Heart right ventricle (tissue), 16 donors: ENCODE measurements at regions of chr6 and their contacts with region 1.

Region 1: DNA sequence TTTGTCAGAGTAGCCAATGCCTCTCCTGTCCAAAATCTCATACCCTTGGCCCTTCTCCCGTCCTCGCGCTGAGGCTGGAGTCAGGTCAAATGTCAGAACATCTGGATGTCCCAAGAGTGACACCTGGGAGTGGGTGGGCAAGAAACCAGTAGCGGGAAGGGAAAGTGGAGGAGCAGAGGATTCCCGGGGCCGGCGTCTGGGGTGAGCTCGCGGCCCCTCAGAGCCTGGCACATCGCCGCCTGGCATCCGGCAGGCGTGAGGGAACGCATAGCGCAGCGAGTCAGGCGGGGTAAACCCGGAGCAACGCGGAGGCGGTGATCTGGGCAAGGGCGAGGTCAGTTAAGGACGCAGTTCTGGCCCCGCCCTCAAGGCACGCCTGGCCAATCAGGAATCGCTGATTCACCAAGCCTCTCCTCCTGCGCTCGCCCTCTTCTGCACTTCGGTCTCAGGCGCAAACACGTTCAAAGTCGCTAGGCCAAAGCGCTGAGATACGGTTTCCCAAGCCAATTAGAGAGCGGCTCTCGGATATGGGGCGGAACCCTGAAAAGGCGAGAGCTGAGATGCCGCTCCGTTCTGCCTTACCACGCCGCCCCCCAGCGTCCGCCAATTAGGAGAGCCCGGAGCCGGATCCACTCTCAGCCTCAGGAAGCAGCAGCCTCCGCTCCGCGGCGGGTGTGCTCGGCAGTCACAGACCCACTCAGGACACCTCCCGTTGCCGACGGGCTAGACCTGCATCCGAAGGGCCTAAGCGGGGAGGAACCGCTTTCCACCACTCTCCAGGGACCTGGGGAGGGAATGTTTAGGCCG is 22.5 kb downstream of the VPS52 start:
- DNase-seq: peak; percentile 97 to 98
- ATAC-seq: peak; percentile 94 to 98 (median 97)
- H3K4me3 ChIP-seq: peak overlapping the region; percentile 22 to 76 (median 61)
- H3K27ac ChIP-seq: peak overlapping the region; percentile 82 to 96 (median 92)
- H3K4me1 ChIP-seq: peaks cover 7 to 33% (median 22%) of the 10 kb centered on the region in 9 donors
- H3K27me3 ChIP-seq: peaks cover 0 to 12% (median 0%) of the 10 kb centered on the region in 7 donors
- CTCF ChIP-seq: peak in 5 of 9 donors; percentile 28 to 56 (median 36)

Region 2: GRCh38 chr6:32894080-32895005 is 354.8 kb before region 1 on chr6:
- intact Hi-C with region 1: loop called in 1 of 10 experiments (anchors 1 kb)
- DNase-seq: peak; percentile 94 to 95
- ATAC-seq: peak; percentile 99 to 100 (median 100)
- H3K4me3 ChIP-seq: peak overlapping the region; percentile 32 to 82 (median 70)
- H3K27ac ChIP-seq: peak overlapping the region; percentile 62 to 92 (median 86)
- H3K4me1 ChIP-seq: peaks cover 0 to 18% (median 10%) of the 10 kb centered on the region in 9 donors
- H3K27me3 ChIP-seq: no peaks in the 10 kb centered on the region
- CTCF ChIP-seq: peak in 2 of 9 donors; percentile 17 to 27

Region 3: GRCh38 chr6:33008944-33009861 is 239.9 kb before region 1 on chr6 and contains the start of gene HLA-DOA:
- intact Hi-C with region 1: loop called in 7 of 10 experiments (anchors 1 to 10 kb)
- DNase-seq: peak in 1 of 2 donors; percentile 30
- ATAC-seq: peak; percentile 24 to 79 (median 54)
- H3K4me3 ChIP-seq: peak within 1 kb of the TSS in 8 of 10 donors; percentile 6 to 54 (median 43)
- H3K27ac ChIP-seq: peak within 1 kb of the TSS in 5 of 10 donors; percentile 25 to 79 (median 48)
- H3K4me1 ChIP-seq: peaks cover 0 to 16% (median 9%) of the 10 kb centered on the region in 9 donors
- H3K27me3 ChIP-seq: peaks cover 0 to 38% (median 9%) of the 10 kb centered on the region in 7 donors
- CTCF ChIP-seq: peak in 1 of 9 donors; percentile 18
- total RNA-seq, gene HLA-DOA: 0.75 to 22.8 (median 2.0) TPM

Region 4: DNA sequence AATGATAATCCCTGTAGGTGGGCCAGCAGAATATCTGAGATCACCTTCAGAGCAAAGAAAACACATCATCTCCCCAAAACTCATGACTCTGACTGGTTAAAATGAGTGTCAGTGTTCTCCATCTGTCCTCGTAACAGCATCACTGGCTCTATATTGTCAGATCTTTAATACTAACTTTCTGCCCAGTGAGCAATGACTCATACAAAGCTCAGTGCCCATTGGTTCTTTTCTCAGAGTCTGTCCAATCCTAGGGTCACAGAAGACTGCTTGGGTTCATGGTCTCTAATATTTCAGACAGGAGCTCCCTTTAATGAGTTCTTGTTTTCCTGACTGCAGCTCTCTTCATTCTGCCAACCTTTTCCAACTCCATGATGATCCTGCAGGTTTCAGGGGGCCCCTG is 137.0 kb before region 1 on chr6:
- intact Hi-C with region 1: loop called in 5 of 10 experiments (anchors 5 to 10 kb)
- DNase-seq: peak in 1 of 2 donors; percentile 45
- ATAC-seq: peak; percentile 74 to 96 (median 91)
- H3K4me3 ChIP-seq: no peak overlapping the region
- H3K27ac ChIP-seq: no peak overlapping the region
- H3K4me1 ChIP-seq: peaks cover 0 to 36% (median 3%) of the 10 kb centered on the region in 9 donors
- H3K27me3 ChIP-seq: peaks cover 0 to 70% (median 55%) of the 10 kb centered on the region in 7 donors
- CTCF ChIP-seq: no peak

Region 5: DNA sequence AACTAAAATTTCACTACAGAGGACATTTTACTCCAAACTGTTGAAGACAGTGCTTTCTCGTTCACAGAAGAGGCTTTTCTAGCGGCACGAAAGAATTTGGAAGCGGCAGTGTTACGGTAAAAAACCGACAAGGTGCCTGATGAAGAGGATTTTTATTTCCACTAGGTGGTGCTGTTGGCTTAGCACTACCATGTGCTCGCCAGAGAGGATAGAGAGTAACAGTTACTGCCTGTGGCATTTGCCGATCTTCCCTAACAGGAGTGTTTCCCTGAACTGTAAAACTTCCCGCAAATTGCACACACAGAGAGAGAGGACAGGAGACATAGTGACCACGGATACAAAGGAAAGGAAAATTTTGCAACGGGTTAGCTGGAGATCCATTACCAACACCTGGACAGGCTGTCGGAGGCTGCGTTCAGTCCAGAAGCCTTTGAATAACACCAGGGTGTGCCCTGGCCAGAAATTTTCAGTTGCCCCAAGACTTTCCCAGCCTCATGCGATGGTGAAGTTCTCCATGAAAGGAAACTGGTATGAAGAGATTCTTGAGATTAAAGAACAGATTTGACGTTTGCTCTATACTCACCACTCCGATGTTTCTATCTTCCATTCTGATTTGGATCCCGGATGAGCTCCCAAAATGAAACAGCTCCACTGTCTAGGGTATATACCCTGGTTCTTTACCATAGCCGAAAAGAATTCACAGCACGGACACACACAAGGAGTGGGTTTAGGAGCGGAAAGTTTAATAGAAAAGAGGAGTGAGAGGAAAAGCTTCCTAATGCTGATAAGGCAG is 125.2 kb before region 1 on chr6:
- intact Hi-C with region 1: loop called in 9 of 10 experiments (anchors 2 to 10 kb)
- DNase-seq: no peak
- ATAC-seq: no peak
- H3K4me3 ChIP-seq: no peak overlapping the region
- H3K27ac ChIP-seq: no peak overlapping the region
- H3K4me1 ChIP-seq: no peaks in the 10 kb centered on the region
- H3K27me3 ChIP-seq: peaks cover 0 to 29% (median 0%) of the 10 kb centered on the region in 7 donors
- CTCF ChIP-seq: peak in 7 of 9 donors; percentile 24 to 55 (median 47)

Region 6: GRCh38 chr6:33200219-33201146 is 48.6 kb before region 1 on chr6 and contains the starts of genes RXRB and SLC39A7:
- intact Hi-C with region 1: loop called in 3 of 10 experiments (anchors 2 to 5 kb)
- DNase-seq: peak; percentile 99 to 100
- ATAC-seq: peak; percentile 84 to 95 (median 92)
- H3K4me3 ChIP-seq: peak within 1 kb of the TSS; percentile 56 to 97 (median 80)
- H3K27ac ChIP-seq: peak within 1 kb of the TSS; percentile 94 to 99 (median 98)
- H3K4me1 ChIP-seq: peaks cover 27 to 78% (median 66%) of the 10 kb centered on the region in 9 donors
- H3K27me3 ChIP-seq: no peaks in the 10 kb centered on the region
- CTCF ChIP-seq: no peak
- total RNA-seq, gene RXRB: 29.7 to 39.1 (median 33.2) TPM
- total RNA-seq, gene SLC39A7: 44.8 to 104 (median 53.1) TPM

Region 7: DNA sequence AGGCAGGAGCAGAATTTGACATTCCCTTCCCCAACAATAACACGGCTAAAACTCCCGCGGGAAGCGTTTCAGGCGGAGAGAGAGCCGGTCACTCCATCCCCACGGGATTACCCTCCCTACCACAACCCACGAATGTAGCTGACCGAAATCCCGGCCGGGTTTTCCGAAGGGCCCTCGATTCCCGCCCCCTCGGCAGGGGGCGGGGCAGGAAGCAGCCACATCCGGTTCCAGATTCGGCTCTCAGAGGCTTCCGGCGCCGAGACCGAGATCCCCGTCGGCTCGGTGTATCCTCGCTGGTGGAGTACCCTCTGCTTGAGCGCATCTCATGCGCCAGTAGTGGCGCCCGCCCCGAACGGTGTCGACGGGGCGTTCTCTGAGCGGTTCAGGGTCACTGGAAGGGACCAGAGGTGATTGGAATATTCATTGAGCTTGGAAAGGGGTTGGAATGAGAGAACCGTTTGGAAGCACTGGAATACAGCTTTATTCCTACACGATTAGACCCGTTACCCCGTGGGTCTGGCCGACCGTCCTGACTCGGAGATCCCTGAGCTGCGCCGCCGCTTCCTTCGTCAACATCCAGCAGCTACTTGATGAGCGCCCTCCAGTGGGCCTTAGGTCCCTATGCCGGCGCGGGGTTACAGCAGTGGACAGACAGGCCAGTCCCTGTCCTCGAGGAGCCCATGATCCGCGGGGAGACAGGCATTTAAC is 50.3 kb after region 1 on chr6:
- intact Hi-C with region 1: loop called in 1 of 10 experiments (anchors 2 kb)
- DNase-seq: peak; percentile 93 to 95
- ATAC-seq: peak; percentile 76 to 90 (median 84)
- H3K4me3 ChIP-seq: peak overlapping the region; percentile 65 to 97 (median 80)
- H3K27ac ChIP-seq: peak overlapping the region; percentile 85 to 99 (median 98)
- H3K4me1 ChIP-seq: peaks cover 11 to 41% (median 37%) of the 10 kb centered on the region in 9 donors
- H3K27me3 ChIP-seq: no peaks in the 10 kb centered on the region
- CTCF ChIP-seq: peak; percentile 55 to 90 (median 80)